GM12878 (cell line): ENCODE measurements at regions of chr2 and their contacts with region 1.

Region 1: GRCh38 chr2:181457121-181457740 is at the start of gene ITGA4:
- DNase-seq: peak; percentile 56
- ATAC-seq: peak; percentile 90
- H3K4me3 ChIP-seq: peak within 1 kb of the TSS; percentile 88
- H3K27ac ChIP-seq: peak within 1 kb of the TSS; percentile 97
- H3K4me1 ChIP-seq: peaks cover 13% of the 10 kb centered on the region
- H3K27me3 ChIP-seq: no peaks in the 10 kb centered on the region
- CTCF ChIP-seq: peak; percentile 81 to 92 (median 81)
- EP300 ChIP-seq: no peak
- POLR2A ChIP-seq: peak; percentile 84
- RAD21 ChIP-seq: peak; percentile 93
- polyA plus RNA-seq, gene ITGA4: 12.4 to 16.2 TPM

Region 2: DNA sequence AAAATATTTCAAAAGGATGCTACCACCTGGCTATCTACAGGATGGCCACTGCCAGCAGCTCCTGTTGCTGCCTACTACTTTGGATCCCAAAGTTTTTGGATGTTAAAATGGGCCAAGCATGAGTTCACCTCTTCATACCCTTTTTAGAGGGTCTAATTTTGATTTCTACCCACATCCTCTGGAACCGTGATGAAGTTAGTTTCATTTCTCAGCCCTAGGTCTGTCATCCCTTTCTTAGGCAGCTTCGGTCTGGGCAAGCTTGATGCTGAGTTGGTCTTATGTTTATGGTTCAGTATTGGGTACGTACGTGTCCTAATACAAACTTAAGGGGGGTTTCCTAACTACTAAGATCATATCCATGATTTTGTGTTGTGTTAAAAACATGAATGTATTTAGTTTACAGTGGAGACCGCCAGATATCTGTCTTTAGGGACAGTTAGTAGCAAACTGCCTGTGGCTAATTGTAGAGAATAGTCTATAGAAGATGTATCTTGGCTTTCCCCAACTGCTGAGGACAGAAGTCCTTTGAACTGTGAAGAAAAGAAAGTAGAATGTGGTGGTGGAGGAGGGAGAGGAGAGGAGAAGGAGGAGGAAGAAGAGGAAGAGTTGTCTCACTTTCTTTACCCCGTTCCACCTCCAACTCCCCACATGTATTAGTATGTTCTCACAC is 291.9 kb before region 1 on chr2:
- CTCF ChIA-PET with region 1: no interaction called
- POLR2A ChIA-PET with region 1: no interaction called
- RAD21 ChIA-PET with region 1: no interaction called
- SMC1A ChIA-PET with region 1: no interaction called
- in situ Hi-C with region 1: loop called (anchors 5 kb)
- intact Hi-C with region 1: loop called (anchors 5 kb)
- DNase-seq: no peak
- ATAC-seq: peak; percentile 73
- H3K4me3 ChIP-seq: peak overlapping the region; percentile 30; the same call in 1 of the 2 replicates
- H3K27ac ChIP-seq: peak overlapping the region; percentile 93
- H3K4me1 ChIP-seq: peaks cover 33% of the 10 kb centered on the region
- H3K27me3 ChIP-seq: no peaks in the 10 kb centered on the region
- CTCF ChIP-seq: no peak
- EP300 ChIP-seq: no peak
- POLR2A ChIP-seq: no peak
- RAD21 ChIP-seq: peak; percentile 18; the same call in 1 of the 2 replicates

Region 3: GRCh38 chr2:181235683-181236459 is 221.4 kb before region 1 on chr2:
- CTCF ChIA-PET with region 1: interaction called, 5 read pairs
- POLR2A ChIA-PET with region 1: no interaction called
- RAD21 ChIA-PET with region 1: interaction called, 4 read pairs
- SMC1A ChIA-PET with region 1: interaction called, 3 read pairs
- in situ Hi-C with region 1: no loop called
- intact Hi-C with region 1: loop called (anchors 2 kb)
- DNase-seq: peak; percentile 82
- ATAC-seq: peak; percentile 92
- H3K4me3 ChIP-seq: no peak overlapping the region
- H3K27ac ChIP-seq: no peak overlapping the region
- H3K4me1 ChIP-seq: peaks cover 18% of the 10 kb centered on the region
- H3K27me3 ChIP-seq: no peaks in the 10 kb centered on the region; a peak in 1 of 4 replicates
- CTCF ChIP-seq: no peak
- EP300 ChIP-seq: peak; percentile 84 to 91; a peak in 3 of 4 replicates
- POLR2A ChIP-seq: no peak
- RAD21 ChIP-seq: peak; percentile 32; the same call in 1 of the 2 replicates

Region 4: DNA sequence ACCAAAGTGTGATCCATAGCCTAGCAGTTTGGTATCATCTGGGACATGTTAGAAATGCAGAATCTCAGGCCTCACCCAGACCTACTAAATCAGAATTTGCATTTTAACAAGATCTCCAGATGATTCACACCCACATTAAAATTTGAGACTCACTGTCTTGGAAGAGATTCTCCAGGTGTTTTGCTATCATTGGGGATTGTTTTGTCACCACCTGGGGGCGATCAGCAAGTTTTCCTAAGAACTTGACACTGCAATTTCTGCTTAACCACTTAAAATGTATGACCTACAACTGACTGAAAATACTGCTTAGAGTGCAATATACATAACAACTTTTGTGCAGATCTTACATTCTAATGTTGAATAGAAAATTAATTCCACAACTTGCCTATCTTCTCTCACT is 19.0 kb before region 1 on chr2:
- CTCF ChIA-PET with region 1: interaction called, 8 read pairs
- POLR2A ChIA-PET with region 1: no interaction called
- RAD21 ChIA-PET with region 1: interaction called, 5 read pairs
- SMC1A ChIA-PET with region 1: interaction called, 37 read pairs
- in situ Hi-C with region 1: no loop called
- intact Hi-C with region 1: no loop called
- DNase-seq: no peak
- ATAC-seq: peak; percentile 58
- H3K4me3 ChIP-seq: no peak overlapping the region
- H3K27ac ChIP-seq: no peak overlapping the region
- H3K4me1 ChIP-seq: no peaks in the 10 kb centered on the region
- H3K27me3 ChIP-seq: no peaks in the 10 kb centered on the region
- CTCF ChIP-seq: peak; percentile 20 to 34 (median 24); a peak in 4 of 6 replicates
- EP300 ChIP-seq: no peak
- POLR2A ChIP-seq: no peak
- RAD21 ChIP-seq: 0 out of 2 replicates have a peak, but pooled peaks have one; percentile 22